AG04450 (cell line): ENCODE measurements at regions of chr1 and their contacts with region 1.

Region 1: DNA sequence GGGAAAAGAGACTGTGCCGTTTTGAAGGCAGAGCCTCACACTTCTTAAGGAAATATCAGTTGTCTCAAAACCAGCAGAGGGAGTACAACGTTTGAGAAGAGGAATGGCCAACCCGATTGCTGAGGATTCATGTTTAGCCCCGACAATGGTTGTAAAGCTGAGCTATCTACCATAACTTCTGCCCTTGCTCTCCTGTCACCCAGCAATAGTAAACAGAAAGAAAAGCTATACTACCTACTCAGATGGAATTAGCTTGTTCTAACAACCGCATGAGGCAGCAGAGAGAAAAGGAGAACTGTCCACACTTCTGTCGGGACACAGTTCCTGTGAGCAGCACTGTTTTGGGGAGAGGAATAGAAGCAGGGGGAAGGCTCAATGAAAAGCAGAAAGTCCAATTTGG is 91.2 kb downstream of the SLC45A1 start:
- DNase-seq: no peak
- H3K4me3 ChIP-seq: no peak overlapping the region
- H3K27ac ChIP-seq: peak overlapping the region; percentile 76
- H3K27me3 ChIP-seq: no peaks in the 10 kb centered on the region
- CTCF ChIP-seq: peak; percentile 67

Region 2: DNA sequence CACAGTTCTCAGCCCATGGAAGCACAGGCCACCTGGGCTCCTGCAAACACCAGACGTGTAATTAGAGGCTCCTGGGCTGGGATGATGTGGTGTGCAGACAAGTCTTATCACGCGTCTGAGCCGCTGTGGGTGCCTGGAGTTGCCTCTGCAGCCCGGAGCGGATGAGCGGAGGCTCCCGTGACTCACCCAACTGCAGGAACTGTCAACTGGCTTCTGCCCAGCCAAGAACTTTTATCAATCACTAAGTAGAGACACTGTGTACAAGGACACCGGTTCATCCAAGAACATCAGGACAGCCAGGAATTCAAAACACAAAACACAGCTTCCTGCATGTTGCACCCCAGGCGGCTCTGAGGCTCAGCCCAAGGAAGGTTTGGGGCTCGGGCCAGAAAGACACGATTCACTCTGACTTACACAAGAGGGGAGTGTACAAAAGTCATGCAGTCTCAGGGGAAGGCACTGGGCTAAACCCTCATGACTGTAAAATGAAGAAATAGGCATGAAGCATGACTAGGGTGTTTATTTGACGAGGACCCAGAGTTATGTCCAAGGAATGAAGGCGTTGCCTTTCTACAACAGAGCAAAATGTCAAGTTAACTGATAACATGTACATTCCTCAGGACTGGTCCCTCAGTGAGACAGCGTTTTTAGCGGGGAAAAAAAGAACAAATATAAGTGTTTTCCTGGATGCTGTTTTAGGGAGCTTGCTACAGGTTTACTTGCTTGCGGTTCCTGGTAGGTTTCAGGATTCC is 404.1 kb before region 1 on chr1:
- CTCF ChIA-PET with region 1: no interaction called
- POLR2A ChIA-PET with region 1: no interaction called
- DNase-seq: peak; percentile 89
- H3K4me3 ChIP-seq: peak overlapping the region; percentile 33
- H3K27ac ChIP-seq: peak overlapping the region; percentile 96
- H3K27me3 ChIP-seq: no peaks in the 10 kb centered on the region
- CTCF ChIP-seq: no peak

Region 3: GRCh38 chr1:8373581-8374241 is 35.4 kb before region 1 on chr1:
- CTCF ChIA-PET with region 1: no interaction called
- POLR2A ChIA-PET with region 1: no interaction called
- DNase-seq: peak; percentile 69
- H3K4me3 ChIP-seq: 0 out of 2 replicates have a peak overlapping the region, but pooled peaks have one; percentile 3
- H3K27ac ChIP-seq: peak overlapping the region; percentile 91
- H3K27me3 ChIP-seq: no peaks in the 10 kb centered on the region
- CTCF ChIP-seq: no peak

Region 4: DNA sequence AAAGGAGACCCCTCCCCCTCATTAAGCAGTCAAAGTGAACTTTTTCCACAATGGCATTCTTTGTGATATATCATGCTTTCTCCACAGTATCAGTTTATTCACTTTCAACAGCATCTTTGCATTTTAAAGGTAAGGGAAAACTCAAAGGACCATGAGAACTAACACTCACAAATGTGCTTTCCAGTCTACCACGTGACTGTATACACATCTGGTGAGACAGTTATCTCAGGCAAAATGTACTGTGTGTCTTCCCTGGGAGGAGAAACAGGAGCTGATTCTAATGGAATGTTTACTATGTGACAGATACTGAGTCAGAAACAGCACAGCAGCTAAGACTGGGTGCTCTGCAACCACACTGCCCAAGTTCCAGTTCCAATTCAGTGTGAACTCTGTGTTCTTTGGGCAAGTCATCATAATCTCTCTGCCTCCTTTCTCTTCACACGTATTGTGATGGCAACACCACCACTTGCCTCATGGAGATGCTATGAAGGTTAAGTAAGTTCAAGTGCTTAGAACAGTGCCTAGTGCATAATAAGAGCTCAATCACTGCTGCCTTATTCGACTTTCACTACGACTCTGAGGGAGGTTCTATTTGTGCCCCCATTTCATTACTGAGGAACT is 12.2 kb before region 1 on chr1:
- CTCF ChIA-PET with region 1: interaction called, 9 read pairs
- POLR2A ChIA-PET with region 1: interaction called, 17 read pairs
- DNase-seq: peak; percentile 89
- H3K4me3 ChIP-seq: peak overlapping the region; percentile 15; the same call in 1 of the 2 replicates
- H3K27ac ChIP-seq: peak overlapping the region; percentile 90
- H3K27me3 ChIP-seq: no peaks in the 10 kb centered on the region
- CTCF ChIP-seq: no peak

Region 5: GRCh38 chr1:8419172-8419571 is 10.1 kb after region 1 on chr1:
- CTCF ChIA-PET with region 1: interaction called, 12 read pairs
- POLR2A ChIA-PET with region 1: interaction called, 4 read pairs
- DNase-seq: no peak
- H3K4me3 ChIP-seq: peak overlapping the region; percentile 31
- H3K27ac ChIP-seq: no peak overlapping the region
- H3K27me3 ChIP-seq: no peaks in the 10 kb centered on the region
- CTCF ChIP-seq: no peak